ENCODE measurements at regions of chr17 and their contacts with region 1.

Region 1: DNA sequence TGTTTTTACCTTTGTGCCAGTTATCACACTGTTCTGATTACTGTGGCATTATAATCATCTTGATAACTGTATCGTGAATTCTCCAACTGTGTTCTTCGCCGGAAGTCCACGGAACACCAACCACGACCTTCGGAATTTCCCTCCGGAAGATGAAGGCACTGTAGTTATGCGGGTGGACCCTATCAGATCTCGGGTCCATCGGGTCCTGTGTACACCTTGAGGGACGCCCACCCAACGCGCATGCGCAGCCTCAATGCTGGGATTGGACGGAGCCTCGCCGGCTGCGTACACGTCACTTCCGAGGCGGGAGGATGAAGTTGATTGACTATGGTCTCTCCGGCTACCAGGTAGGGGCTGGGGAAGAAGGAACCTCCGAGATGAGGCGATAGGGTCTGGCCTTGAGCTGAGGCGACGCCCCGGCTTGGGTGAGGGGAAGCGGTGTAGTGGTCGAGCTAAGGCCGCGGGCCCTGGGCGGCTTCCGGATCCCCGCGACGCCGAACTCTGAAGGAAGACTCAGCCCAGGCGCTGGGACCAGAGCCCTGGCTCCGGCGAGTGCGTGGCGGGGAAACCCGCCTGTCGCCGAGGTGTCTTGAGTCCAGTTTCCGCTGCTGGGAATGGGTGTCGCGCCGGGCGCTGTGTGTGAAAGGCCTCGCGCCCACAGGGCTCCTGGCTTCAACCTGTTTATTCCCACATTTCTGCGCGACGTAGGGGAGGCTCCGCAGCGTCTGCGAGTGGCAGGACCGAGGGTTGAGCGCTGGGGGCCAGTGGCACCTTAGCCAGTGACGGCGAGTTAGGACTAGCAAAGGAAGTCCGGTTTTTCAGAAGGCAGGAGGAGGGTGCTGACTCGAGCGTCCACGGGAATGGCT is at the start of gene DHRS7B:
- DNase-seq: peak; percentile 95
- ATAC-seq: peak; percentile 93 to 96
- H3K4me3 ChIP-seq: peak within 1 kb of the TSS; percentile 80 to 99 (median 90)
- H3K27ac ChIP-seq: peak within 1 kb of the TSS; percentile 95 to 100 (median 96)
- H3K4me1 ChIP-seq: peaks cover 30 to 36% of the 10 kb centered on the region in 2 donors
- H3K27me3 ChIP-seq: no peaks in the 10 kb centered on the region
- CTCF ChIP-seq: peak in 1 of 5 experiments; percentile 16
- POLR2A ChIP-seq: peak; percentile 78 to 90
- total RNA-seq, gene DHRS7B: 35.7 to 73.2 (median 43.2) TPM

Region 2: GRCh38 chr17:21166595-21167210 is 39.8 kb after region 1 on chr17:
- in situ Hi-C with region 1: no loop called
- intact Hi-C with region 1: loop called (anchors 2 kb)
- DNase-seq: no peak
- ATAC-seq: peak; percentile 53 to 63
- H3K4me3 ChIP-seq: peak overlapping the region; percentile 34 to 42 (median 36)
- H3K27ac ChIP-seq: peak overlapping the region; percentile 92 to 98 (median 96)
- H3K4me1 ChIP-seq: peaks cover 84 to 89% of the 10 kb centered on the region in 2 donors
- H3K27me3 ChIP-seq: no peaks in the 10 kb centered on the region
- CTCF ChIP-seq: no peak
- POLR2A ChIP-seq: no peak

Region 3: DNA sequence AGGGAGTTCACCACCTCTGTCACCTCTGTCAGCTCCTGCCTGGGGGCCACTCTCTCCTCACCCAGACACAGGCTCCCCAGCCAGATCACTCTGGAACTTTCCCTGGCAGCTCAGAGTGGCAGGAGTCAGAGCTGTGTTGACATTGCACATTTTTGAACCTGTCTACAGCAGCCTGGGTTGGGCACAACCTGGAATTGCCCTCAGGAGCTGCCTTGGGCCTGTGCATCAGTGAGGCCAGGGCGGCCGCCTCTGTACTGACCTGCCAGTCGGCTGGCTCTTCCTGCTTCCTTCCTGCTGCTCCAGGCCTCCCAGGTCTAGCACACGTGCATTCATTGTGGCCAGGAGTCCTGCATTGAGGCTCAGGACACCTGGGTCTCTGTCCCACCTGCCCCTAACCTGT is 101.2 kb after region 1 on chr17:
- in situ Hi-C with region 1: loop called in 2 of 4 experiments (anchors 10 to 25 kb)
- intact Hi-C with region 1: no loop called
- DNase-seq: no peak
- ATAC-seq: peak in 1 of 2 donors; percentile 4
- H3K4me3 ChIP-seq: no peak overlapping the region
- H3K27ac ChIP-seq: peak overlapping the region in 1 of 4 donors; percentile 24
- H3K4me1 ChIP-seq: peaks cover 0 to 12% of the 10 kb centered on the region in 2 donors
- H3K27me3 ChIP-seq: no peaks in the 10 kb centered on the region
- CTCF ChIP-seq: no peak
- POLR2A ChIP-seq: no peak

Region 4: GRCh38 chr17:21275579-21276263 is 148.8 kb after region 1 on chr17:
- in situ Hi-C with region 1: loop called in 1 of 4 experiments (anchors 10 kb)
- intact Hi-C with region 1: loop called (anchors 2 kb)
- DNase-seq: peak; percentile 88 to 93
- ATAC-seq: peak; percentile 74 to 76
- H3K4me3 ChIP-seq: peak overlapping the region; percentile 59 to 80 (median 64)
- H3K27ac ChIP-seq: peak overlapping the region; percentile 75 to 94 (median 82)
- H3K4me1 ChIP-seq: peaks cover 31 to 33% of the 10 kb centered on the region in 2 donors
- H3K27me3 ChIP-seq: no peaks in the 10 kb centered on the region
- CTCF ChIP-seq: no peak
- POLR2A ChIP-seq: peak; percentile 71 to 80

Region 5: DNA sequence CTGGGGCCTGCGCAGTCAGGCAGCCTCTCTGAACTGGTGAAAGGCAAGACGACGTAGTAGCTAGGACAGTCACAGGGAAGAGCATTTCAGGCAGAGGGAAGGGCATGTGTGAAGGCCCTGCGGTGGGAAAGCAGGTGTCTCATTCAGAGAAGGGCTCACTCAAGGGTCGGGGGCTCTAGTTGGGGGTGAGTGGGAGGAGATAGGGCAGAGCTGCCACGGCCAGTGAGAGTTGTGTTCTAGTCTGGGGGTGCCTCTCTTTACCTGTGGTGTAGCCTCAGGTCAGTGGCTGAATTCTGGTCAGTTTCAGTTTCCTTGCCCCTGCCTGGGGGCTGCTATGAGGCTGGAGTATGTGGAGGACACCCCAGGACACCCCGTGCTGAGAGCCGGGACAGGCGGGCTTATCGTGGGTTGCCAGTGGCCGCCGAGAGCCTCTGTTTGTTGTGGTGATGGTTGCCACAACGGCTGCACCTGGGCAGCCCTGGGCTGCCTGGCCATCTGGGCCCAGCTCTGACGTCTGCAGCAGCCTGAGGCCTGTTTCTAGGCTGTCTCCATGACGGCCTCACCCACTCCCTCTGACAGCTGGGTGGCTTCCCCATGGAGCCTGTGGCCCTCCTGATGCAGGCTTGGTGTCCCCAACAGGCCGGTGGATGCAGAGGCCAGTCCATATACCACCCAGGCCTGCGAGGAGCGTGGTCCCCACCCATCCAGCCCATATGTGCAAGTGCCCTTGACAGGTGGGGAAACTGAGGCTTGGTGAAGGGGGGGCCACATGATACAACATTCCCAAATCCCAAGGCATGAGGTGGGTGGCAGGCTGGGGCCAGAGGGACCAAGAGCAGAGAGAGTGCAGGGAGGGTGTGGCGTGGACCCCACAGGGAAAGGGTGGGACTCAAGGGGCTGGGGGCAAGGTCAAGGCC is 168.4 kb after region 1 on chr17:
- in situ Hi-C with region 1: loop called in 1 of 4 experiments (anchors 10 kb)
- intact Hi-C with region 1: no loop called
- DNase-seq: peak in 1 of 2 donors; percentile 71
- ATAC-seq: peak in 1 of 2 donors; percentile 25
- H3K4me3 ChIP-seq: no peak overlapping the region
- H3K27ac ChIP-seq: peak overlapping the region; percentile 68 to 96 (median 74)
- H3K4me1 ChIP-seq: peaks cover 46 to 53% of the 10 kb centered on the region in 2 donors
- H3K27me3 ChIP-seq: no peaks in the 10 kb centered on the region
- CTCF ChIP-seq: no peak
- POLR2A ChIP-seq: no peak

Region 6: GRCh38 chr17:21511363-21512198 is 384.7 kb after region 1 on chr17:
- in situ Hi-C with region 1: loop called in 3 of 4 experiments (anchors 10 to 25 kb)
- intact Hi-C with region 1: loop called (anchors 5 kb)
- DNase-seq: peak; percentile 71 to 84
- ATAC-seq: peak; percentile 95 to 97
- H3K4me3 ChIP-seq: peak overlapping the region; percentile 65 to 82 (median 68)
- H3K27ac ChIP-seq: peak overlapping the region; percentile 68 to 80 (median 74)
- H3K4me1 ChIP-seq: peaks cover 4 to 16% of the 10 kb centered on the region in 2 donors
- H3K27me3 ChIP-seq: no peaks in the 10 kb centered on the region
- CTCF ChIP-seq: peak; percentile 61 to 90 (median 78)
- POLR2A ChIP-seq: no peak